Sigmoid colon (tissue), 7 donors: ENCODE measurements at regions of chr17 and their contacts with region 1.

Region 1: GRCh38 chr17:8079291-8080207 is 8.0 kb downstream of the ALOX12B start:
- DNase-seq: peak; percentile 83
- H3K4me3 ChIP-seq: peak overlapping the region in 3 of 4 donors; percentile 36 to 45 (median 40)
- H3K27ac ChIP-seq: peak overlapping the region in 1 of 4 donors; percentile 18
- H3K4me1 ChIP-seq: peaks cover 0 to 15% (median 11%) of the 10 kb centered on the region in 4 donors
- H3K27me3 ChIP-seq: peaks cover 6 to 95% (median 55%) of the 10 kb centered on the region in 3 donors
- CTCF ChIP-seq: peak; percentile 47 to 95 (median 68)
- EP300 ChIP-seq: no peak
- POLR2A ChIP-seq: no peak

Region 2: DNA sequence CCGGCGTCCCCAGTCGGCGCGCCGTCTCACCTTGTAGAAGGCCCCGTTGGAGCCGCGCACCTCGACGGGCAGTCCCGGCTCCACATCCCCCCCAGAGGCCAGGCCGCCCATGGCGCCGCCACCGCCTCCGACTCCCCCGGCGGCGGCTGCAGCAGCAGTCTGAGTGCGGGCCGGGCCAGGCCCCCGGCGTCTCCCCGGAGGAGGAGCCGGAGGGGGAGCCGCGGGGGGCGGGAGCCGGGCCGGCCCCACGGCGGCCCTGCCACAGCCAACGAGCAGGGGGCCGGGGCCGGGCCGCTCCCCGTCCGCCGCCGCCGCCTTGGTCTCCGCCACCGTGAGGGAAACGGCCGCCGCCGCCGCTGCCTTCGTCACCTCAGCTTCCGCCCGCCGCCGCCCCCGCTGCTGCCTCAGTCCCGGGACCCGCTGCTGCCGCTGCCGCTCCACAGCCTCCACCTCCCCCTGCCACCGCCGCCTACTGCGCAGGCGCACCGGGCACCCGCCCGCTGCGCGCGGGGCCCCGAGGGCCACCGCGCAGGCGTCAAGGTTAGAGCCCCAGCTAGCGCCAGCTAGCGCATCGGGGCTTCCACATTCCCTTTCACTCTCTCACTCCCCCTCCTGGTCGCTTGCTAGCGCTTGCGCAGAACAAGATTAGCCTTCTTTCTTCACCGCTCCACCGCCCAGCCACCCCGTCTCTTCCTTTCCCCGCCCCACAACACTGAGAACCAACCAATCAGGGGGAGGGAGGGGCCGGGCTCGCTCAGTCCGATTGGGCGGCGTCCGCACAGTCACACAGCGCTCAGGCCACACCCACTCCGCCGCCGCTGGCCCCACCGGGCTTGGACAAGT is 464.9 kb before region 1 on chr17 and contains the start of gene FXR2:
- intact Hi-C with region 1: loop called (anchors 5 kb)
- DNase-seq: peak; percentile 100
- H3K4me3 ChIP-seq: peak within 1 kb of the TSS; percentile 57 to 95 (median 80)
- H3K27ac ChIP-seq: peak within 1 kb of the TSS; percentile 91 to 100 (median 95)
- H3K4me1 ChIP-seq: peaks cover 0 to 47% (median 40%) of the 10 kb centered on the region in 4 donors
- H3K27me3 ChIP-seq: no peaks in the 10 kb centered on the region
- CTCF ChIP-seq: peak in 3 of 4 experiments; percentile 49 to 52 (median 51)
- EP300 ChIP-seq: no peak
- POLR2A ChIP-seq: no peak
- total RNA-seq, gene FXR2: 33.8 to 35.5 (median 34.6) TPM

Region 3: DNA sequence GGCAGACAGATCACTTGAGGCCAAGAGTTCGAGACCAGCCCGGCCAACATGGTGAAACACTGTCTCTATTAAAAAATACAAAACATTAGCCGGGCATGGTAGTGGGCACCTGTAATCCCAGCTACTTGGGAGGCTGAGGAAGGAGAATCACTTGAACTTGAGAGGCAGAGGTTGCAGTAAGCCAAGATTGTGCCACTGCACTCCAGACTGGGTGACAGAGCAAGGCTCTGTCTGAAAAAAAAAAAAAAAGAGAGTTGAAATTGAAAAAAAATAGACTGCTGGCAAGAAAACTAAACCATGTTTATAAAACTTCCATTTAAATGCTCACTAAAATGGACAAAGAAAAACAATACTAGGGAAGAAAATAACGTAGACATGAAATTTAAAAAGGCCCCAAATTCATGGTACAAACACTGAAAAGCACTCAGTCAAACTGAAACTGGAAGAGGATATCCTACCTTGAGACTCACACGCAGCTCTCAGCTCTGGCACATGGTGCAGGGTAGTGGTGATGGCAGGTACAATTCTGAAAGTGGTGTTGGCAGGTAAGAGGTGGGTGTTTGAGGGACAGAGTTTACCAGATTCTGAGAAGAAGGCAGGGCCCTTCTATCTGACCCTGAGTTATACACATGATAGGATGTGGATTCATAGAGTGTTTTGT is 128.3 kb before region 1 on chr17:
- intact Hi-C with region 1: no loop called
- DNase-seq: no peak
- H3K4me3 ChIP-seq: no peak overlapping the region
- H3K27ac ChIP-seq: peak overlapping the region; percentile 49 to 73 (median 62)
- H3K4me1 ChIP-seq: peaks cover 0 to 31% (median 16%) of the 10 kb centered on the region in 4 donors
- H3K27me3 ChIP-seq: no peaks in the 10 kb centered on the region
- CTCF ChIP-seq: no peak
- EP300 ChIP-seq: no peak
- POLR2A ChIP-seq: no peak

Region 4: GRCh38 chr17:8001976-8002720 is 77.4 kb before region 1 on chr17 and contains the start of gene GUCY2D:
- intact Hi-C with region 1: no loop called
- DNase-seq: no peak
- H3K4me3 ChIP-seq: peak within 1 kb of the TSS; percentile 8 to 40 (median 31)
- H3K27ac ChIP-seq: no peak within 1 kb of the TSS
- H3K4me1 ChIP-seq: peaks cover 0 to 21% (median 15%) of the 10 kb centered on the region in 4 donors
- H3K27me3 ChIP-seq: peaks cover 15 to 56% (median 35%) of the 10 kb centered on the region in 3 donors
- CTCF ChIP-seq: no peak
- EP300 ChIP-seq: no peak
- POLR2A ChIP-seq: no peak
- total RNA-seq, gene GUCY2D: not detected

Region 5: GRCh38 chr17:8300627-8301242 is 221.2 kb after region 1 on chr17:
- intact Hi-C with region 1: loop called (anchors 10 kb)
- DNase-seq: peak; percentile 77
- H3K4me3 ChIP-seq: no peak overlapping the region
- H3K27ac ChIP-seq: no peak overlapping the region
- H3K4me1 ChIP-seq: peaks cover 0 to 3% (median 0%) of the 10 kb centered on the region in 4 donors
- H3K27me3 ChIP-seq: no peaks in the 10 kb centered on the region
- CTCF ChIP-seq: peak; percentile 82 to 86 (median 83)
- EP300 ChIP-seq: no peak
- POLR2A ChIP-seq: no peak